Posterior vena cava (tissue), 2 donors: ENCODE measurements at regions of chr5 and their contacts with region 1.

Region 1: DNA sequence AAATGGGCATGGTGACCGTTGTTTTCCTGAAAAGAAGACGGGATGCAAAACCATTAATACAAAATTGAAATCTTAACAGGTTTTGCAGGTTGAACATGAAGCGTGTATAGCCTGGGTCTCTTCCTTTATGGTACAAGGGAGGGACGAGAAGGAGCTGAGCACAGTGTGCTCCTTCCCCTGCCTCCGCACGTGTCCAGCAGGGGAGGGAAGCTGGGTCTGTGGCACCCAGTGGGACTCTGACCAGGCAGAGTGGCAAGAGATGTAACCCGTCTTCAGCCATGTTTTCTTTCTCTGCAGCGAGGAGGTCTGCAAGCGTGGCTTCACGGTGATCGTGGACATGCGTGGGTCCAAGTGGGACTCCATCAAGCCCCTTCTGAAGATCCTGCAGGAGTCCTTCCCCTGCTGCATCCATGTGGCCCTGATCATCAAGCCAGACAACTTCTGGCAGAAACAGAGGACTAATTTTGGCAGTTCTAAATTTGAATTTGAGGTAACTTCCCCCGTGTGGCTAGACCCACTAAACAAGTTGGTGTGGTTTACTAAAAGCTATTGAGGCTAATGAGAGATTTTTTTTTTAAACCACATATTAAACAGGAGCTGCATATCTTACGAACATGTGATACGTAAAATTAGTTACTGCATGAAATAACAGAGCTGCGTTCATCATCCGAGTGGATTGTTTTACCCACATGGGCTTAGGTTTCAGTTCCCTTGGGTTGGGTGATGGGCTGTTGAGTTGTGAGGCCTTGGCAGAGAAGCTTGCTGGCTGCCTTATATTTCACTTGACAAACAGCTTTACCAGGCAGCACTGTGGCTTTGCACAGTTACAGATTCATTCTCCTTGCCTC is 143.7 kb downstream of the TRIO start:
- DNase-seq: no peak

Region 2: DNA sequence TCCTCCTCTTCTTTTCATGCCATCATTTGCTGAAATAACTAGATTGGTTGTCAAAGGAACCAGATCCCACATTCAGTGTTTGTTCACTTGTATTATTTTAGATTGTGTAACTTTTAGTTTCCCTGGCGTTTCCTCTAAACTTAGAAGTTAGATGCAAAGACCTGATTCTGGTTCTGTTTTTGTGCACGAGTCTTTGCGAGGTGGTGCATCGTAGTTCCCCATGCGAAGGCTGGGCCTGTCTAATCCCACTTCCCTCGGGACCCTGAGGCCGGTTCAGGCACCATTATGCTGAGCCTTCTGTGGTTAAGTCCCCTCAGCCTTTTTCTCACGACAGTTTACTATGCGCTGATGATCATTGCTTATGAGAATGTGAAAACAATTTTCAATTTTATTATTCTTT is 75.7 kb after region 1 on chr5:
- intact Hi-C with region 1: loop called in 1 of 2 experiments (anchors 2 kb)
- DNase-seq: no peak

Region 3: DNA sequence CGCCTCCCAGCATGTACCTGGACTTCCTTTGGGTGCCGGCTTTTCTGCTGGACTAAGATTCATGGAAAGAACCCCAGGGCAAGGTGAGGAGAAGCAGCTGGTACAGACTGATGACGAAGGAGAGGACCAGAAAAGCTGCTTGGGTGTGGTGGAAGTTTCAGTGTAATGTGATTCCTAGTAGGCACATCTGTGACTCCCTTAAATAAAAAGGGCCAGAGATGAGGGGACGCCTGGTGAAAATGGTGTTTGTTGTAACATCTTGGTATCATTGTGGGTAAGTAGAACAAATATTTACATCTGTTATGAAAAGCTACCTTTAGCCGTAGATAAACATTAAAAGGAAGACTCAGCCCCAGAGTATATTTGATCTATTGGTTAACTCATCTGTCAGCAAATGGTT is 328.5 kb after region 1 on chr5:
- intact Hi-C with region 1: no loop called
- DNase-seq: no peak